ENCODE measurements at regions of chr4 and their contacts with region 1.

Region 1: GRCh38 chr4:21768349-21769310 is 179.9 kb downstream of the KCNIP4 start:
- DNase-seq: peak; percentile 60
- ATAC-seq: peak; percentile 44
- H3K4me3 ChIP-seq: no peak overlapping the region
- H3K27ac ChIP-seq: peak overlapping the region; percentile 71
- H3K4me1 ChIP-seq: peaks cover 7% of the 10 kb centered on the region; the same call in 1 of the 2 replicates
- H3K27me3 ChIP-seq: peaks cover 14% of the 10 kb centered on the region
- CTCF ChIP-seq: peak; percentile 79

Region 2: GRCh38 chr4:21512353-21512752 is 256.3 kb before region 1 on chr4:
- CTCF ChIA-PET with region 1: no interaction called
- POLR2A ChIA-PET with region 1: no interaction called
- intact Hi-C with region 1: loop called (anchors 1 kb)
- DNase-seq: peak; percentile 50
- ATAC-seq: 0 out of 2 replicates have a peak, but pooled peaks have one; percentile 20
- H3K4me3 ChIP-seq: no peak overlapping the region
- H3K27ac ChIP-seq: no peak overlapping the region
- H3K4me1 ChIP-seq: no peaks in the 10 kb centered on the region
- H3K27me3 ChIP-seq: peaks cover 37% of the 10 kb centered on the region
- CTCF ChIP-seq: peak; percentile 65

Measured in PC-3 (cell line).